CD8-positive, alpha-beta T cell (primary cell): ENCODE measurements at regions of chr12 and their contacts with region 1.

Region 1: GRCh38 chr12:118135788-118136558 is at the start of gene PEBP1:
- DNase-seq: peak; percentile 86 to 95 (median 93)
- ATAC-seq: peak; percentile 99
- H3K4me3 ChIP-seq: peak within 1 kb of the TSS; percentile 60 to 72
- H3K4me3 Mint-ChIP-seq: peak within 1 kb of the TSS; percentile 97
- H3K27ac ChIP-seq: peak within 1 kb of the TSS; percentile 47 to 78
- H3K27ac Mint-ChIP-seq: peak within 1 kb of the TSS; percentile 94
- H3K4me1 ChIP-seq: peaks cover 27% of the 10 kb centered on the region
- H3K4me1 Mint-ChIP-seq: peaks cover 33% of the 10 kb centered on the region
- H3K27me3 ChIP-seq: no peaks in the 10 kb centered on the region
- H3K27me3 Mint-ChIP-seq: no peaks in the 10 kb centered on the region
- CTCF ChIP-seq: no peak
- total RNA-seq, gene PEBP1: 91.2 to 91.6 TPM

Region 2: GRCh38 chr12:117190210-117190781 is 945.7 kb before region 1 on chr12 and contains the start of gene FBXO21:
- CTCF ChIA-PET with region 1: no interaction called
- POLR2A ChIA-PET with region 1: no interaction called
- intact Hi-C with region 1: loop called in 1 of 2 experiments (anchors 10 kb)
- DNase-seq: peak; percentile 90 to 98 (median 93)
- ATAC-seq: peak; percentile 96
- H3K4me3 ChIP-seq: peak within 1 kb of the TSS; percentile 49 to 87
- H3K4me3 Mint-ChIP-seq: peak within 1 kb of the TSS; percentile 93
- H3K27ac ChIP-seq: peak within 1 kb of the TSS; percentile 69 to 83
- H3K27ac Mint-ChIP-seq: peak within 1 kb of the TSS; percentile 92
- H3K4me1 ChIP-seq: peaks cover 22% of the 10 kb centered on the region
- H3K4me1 Mint-ChIP-seq: peaks cover 31% of the 10 kb centered on the region
- H3K27me3 ChIP-seq: no peaks in the 10 kb centered on the region
- H3K27me3 Mint-ChIP-seq: no peaks in the 10 kb centered on the region
- CTCF ChIP-seq: no peak
- total RNA-seq, gene FBXO21: 77.7 to 87.7 TPM

Region 3: GRCh38 chr12:118016424-118017264 is 119.3 kb before region 1 on chr12 and contains the start of gene RFC5:
- CTCF ChIA-PET with region 1: no interaction called
- POLR2A ChIA-PET with region 1: interaction called, 3 read pairs
- intact Hi-C with region 1: loop called (anchors 1 to 2 kb)
- DNase-seq: peak; percentile 94 to 99 (median 98)
- ATAC-seq: peak; percentile 97
- H3K4me3 ChIP-seq: peak within 1 kb of the TSS; percentile 88 to 98
- H3K4me3 Mint-ChIP-seq: peak within 1 kb of the TSS; percentile 90
- H3K27ac ChIP-seq: peak within 1 kb of the TSS in 1 of 2 experiments; percentile 58
- H3K27ac Mint-ChIP-seq: peak within 1 kb of the TSS; percentile 90
- H3K4me1 ChIP-seq: peaks cover 19% of the 10 kb centered on the region
- H3K4me1 Mint-ChIP-seq: peaks cover 18% of the 10 kb centered on the region
- H3K27me3 ChIP-seq: no peaks in the 10 kb centered on the region
- H3K27me3 Mint-ChIP-seq: no peaks in the 10 kb centered on the region
- CTCF ChIP-seq: no peak
- total RNA-seq, gene RFC5: 9.9 to 13.8 TPM

Region 4: DNA sequence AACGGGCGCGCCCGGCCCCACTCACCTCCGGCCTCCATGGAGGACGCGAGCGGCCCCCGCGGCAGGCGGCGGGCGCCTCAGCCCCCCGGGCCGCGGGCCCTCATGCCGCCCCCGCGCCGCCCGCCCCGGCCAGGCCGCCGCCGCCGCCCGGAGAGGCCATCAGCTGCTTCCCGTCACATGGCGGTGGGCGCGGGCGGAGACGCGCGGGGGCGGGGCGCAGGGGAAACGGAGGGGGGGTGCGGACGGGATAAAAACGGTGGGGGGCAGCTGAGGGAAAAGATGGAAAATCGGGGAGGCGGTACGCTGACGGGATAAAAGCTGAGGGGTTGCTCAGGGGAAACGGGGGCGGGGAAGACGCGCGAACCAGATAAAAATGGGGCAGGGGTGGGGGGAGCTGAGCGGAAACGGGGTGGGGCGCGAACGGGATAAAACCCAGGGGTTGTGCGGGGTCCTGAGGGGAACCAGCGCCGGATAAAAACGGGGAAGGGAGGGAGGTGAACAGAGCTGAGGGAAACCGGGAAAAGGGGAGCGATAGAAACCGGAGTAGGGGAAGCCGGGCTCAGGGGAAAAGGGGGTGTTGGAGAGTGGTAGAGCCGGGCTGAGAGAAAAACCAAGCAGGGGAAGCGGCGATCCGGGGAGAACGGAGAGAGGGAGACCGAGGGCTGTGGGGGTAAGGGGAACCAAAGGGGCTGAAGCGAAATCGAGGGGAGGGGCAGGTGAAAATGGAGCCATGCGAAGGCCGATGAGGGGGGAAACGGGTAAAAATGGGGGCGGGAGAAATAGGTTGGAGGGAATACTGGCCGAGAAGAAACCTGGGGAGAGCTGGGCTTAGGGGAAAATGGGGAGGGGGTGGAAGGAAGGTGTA is 74.7 kb before region 1 on chr12 and contains the start of gene WSB2:
- CTCF ChIA-PET with region 1: interaction called, 3 read pairs
- POLR2A ChIA-PET with region 1: interaction called, 7 read pairs
- intact Hi-C with region 1: loop called (anchors 1 to 2 kb)
- DNase-seq: peak; percentile 5 to 69 (median 50)
- ATAC-seq: peak; percentile 43
- H3K4me3 ChIP-seq: peak within 1 kb of the TSS; percentile 72 to 86
- H3K4me3 Mint-ChIP-seq: peak within 1 kb of the TSS; percentile 93
- H3K27ac ChIP-seq: peak within 1 kb of the TSS; percentile 67 to 92
- H3K27ac Mint-ChIP-seq: peak within 1 kb of the TSS; percentile 98
- H3K4me1 ChIP-seq: peaks cover 40% of the 10 kb centered on the region
- H3K4me1 Mint-ChIP-seq: peaks cover 57% of the 10 kb centered on the region
- H3K27me3 ChIP-seq: peaks cover 0 to 2% of the 10 kb centered on the region in 2 experiments
- H3K27me3 Mint-ChIP-seq: no peaks in the 10 kb centered on the region
- CTCF ChIP-seq: no peak
- total RNA-seq, gene WSB2: 16.4 to 19.5 TPM

Region 5: GRCh38 chr12:118120579-118121363 is 15.2 kb before region 1 on chr12:
- CTCF ChIA-PET with region 1: interaction called, 6 read pairs
- POLR2A ChIA-PET with region 1: interaction called, 6 read pairs
- intact Hi-C with region 1: loop called (anchors 1 kb)
- DNase-seq: peak; percentile 25 to 74 (median 60)
- ATAC-seq: peak; percentile 65
- H3K4me3 ChIP-seq: no peak overlapping the region
- H3K4me3 Mint-ChIP-seq: peak overlapping the region; percentile 0
- H3K27ac ChIP-seq: peak overlapping the region in 1 of 2 experiments; percentile 34
- H3K27ac Mint-ChIP-seq: peak overlapping the region; percentile 47
- H3K4me1 ChIP-seq: peaks cover 4% of the 10 kb centered on the region
- H3K4me1 Mint-ChIP-seq: peaks cover 11% of the 10 kb centered on the region
- H3K27me3 ChIP-seq: no peaks in the 10 kb centered on the region
- H3K27me3 Mint-ChIP-seq: no peaks in the 10 kb centered on the region
- CTCF ChIP-seq: peak; percentile 75

Region 6: GRCh38 chr12:118190266-118190665 is 54.3 kb after region 1 on chr12:
- CTCF ChIA-PET with region 1: no interaction called
- POLR2A ChIA-PET with region 1: no interaction called
- intact Hi-C with region 1: no loop called
- DNase-seq: no peak
- ATAC-seq: no peak
- H3K4me3 ChIP-seq: no peak overlapping the region
- H3K4me3 Mint-ChIP-seq: no peak overlapping the region
- H3K27ac ChIP-seq: no peak overlapping the region
- H3K27ac Mint-ChIP-seq: no peak overlapping the region
- H3K4me1 ChIP-seq: no peaks in the 10 kb centered on the region
- H3K4me1 Mint-ChIP-seq: peaks cover 4% of the 10 kb centered on the region
- H3K27me3 ChIP-seq: no peaks in the 10 kb centered on the region
- H3K27me3 Mint-ChIP-seq: no peaks in the 10 kb centered on the region
- CTCF ChIP-seq: no peak

Region 7: GRCh38 chr12:118357257-118358007 is 221.5 kb after region 1 on chr12:
- CTCF ChIA-PET with region 1: no interaction called
- POLR2A ChIA-PET with region 1: no interaction called
- intact Hi-C with region 1: loop called in 1 of 2 experiments (anchors 5 kb)
- DNase-seq: peak in 6 of 9 experiments; percentile 33 to 87 (median 60)
- ATAC-seq: peak; percentile 79
- H3K4me3 ChIP-seq: peak overlapping the region; percentile 5 to 9
- H3K4me3 Mint-ChIP-seq: peak overlapping the region; percentile 94
- H3K27ac ChIP-seq: peak overlapping the region; percentile 35 to 77
- H3K27ac Mint-ChIP-seq: peak overlapping the region; percentile 91
- H3K4me1 ChIP-seq: peaks cover 35% of the 10 kb centered on the region
- H3K4me1 Mint-ChIP-seq: peaks cover 65% of the 10 kb centered on the region
- H3K27me3 ChIP-seq: no peaks in the 10 kb centered on the region
- H3K27me3 Mint-ChIP-seq: no peaks in the 10 kb centered on the region
- CTCF ChIP-seq: peak; percentile 24